ENCODE measurements at regions of chr9 and their contacts with region 1.

Region 1: DNA sequence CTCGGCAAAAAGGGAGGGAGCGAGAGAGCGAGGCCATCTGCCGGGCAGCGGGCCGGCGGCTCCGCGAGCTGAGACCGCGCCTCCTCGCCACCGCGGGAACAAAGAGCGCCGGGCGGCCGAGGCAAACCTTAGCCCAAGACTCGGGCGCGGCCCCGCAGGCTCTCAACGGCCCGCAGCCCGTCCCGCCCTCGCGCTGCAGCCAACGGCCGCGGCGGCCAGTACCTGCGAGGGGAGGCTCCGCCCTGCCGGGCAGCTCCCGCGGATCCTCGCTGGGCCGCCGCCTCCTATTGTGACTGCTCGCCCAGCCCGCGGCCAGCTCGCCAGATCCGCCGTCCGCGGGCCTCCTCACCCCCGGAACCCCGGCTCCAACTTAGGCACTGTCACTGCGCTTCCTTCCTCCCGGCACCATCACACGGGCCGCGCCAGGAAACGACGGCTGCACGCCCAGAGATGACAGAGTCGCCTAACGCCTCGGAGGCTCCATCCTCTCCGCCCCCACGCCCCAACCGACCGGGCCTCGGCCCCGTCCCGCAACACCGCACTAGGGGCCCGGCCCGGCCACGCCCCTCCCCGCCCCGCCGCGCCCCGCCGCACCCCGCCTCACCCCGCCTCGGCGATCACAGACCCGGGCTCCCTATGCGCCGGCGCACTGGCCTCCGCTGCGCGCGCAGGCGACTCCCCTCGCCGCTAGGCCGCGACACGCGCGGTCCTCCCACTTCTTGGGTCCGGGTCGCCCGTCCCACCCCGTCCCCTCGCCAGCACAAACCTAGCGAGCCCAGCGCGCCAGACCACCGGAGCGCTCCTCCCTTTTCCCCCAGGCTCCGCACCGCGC is 479 bp upstream of the RNF38 start:
- DNase-seq: peak; percentile 96
- ATAC-seq: peak; percentile 77
- H3K4me3 Mint-ChIP-seq: peak overlapping the region; percentile 93
- H3K27ac Mint-ChIP-seq: peak overlapping the region; percentile 98
- H3K4me1 Mint-ChIP-seq: peaks cover 39% of the 10 kb centered on the region
- H3K27me3 Mint-ChIP-seq: no peaks in the 10 kb centered on the region

Region 2: DNA sequence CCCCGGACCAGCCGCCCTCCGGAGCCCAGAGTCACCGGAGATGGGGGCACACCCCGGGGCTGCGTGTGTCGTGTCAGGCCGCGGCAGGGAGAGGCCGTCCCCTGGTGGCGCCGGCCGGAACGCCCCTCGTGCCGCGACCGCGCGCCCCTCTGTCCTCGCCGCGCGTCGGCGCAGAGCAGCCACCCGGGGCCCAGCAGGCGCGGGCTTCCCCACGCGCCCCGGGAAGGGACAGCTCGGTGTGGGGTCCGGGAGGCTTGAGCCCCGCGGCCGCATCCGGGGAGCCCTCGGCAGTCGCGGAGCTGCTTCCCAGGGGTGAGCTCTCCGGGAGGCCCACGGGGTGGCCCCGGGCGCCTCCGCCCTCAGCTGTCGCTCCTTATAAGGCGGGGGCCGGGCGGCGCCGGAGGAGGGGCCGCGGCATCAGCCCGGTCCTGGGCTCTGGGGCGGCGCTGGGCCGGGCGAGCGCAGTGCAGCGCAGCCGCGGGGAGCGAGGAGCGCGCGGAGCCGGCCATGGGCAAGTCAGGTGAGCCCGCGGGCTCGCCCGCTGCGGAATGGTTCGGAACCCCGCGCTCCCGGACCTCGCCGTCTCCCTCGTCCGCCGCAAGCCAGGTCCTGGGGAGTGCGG is 264.2 kb before region 1 on chr9 and contains the start of gene GLIPR2:
- CTCF ChIA-PET with region 1: no interaction called
- POLR2A ChIA-PET with region 1: no interaction called
- intact Hi-C with region 1: loop called in 1 of 2 experiments (anchors 5 kb)
- DNase-seq: peak; percentile 88
- ATAC-seq: peak; percentile 96
- H3K4me3 Mint-ChIP-seq: peak within 1 kb of the TSS; percentile 81
- H3K27ac Mint-ChIP-seq: peak within 1 kb of the TSS; percentile 48
- H3K4me1 Mint-ChIP-seq: peaks cover 45% of the 10 kb centered on the region
- H3K27me3 Mint-ChIP-seq: no peaks in the 10 kb centered on the region
- total RNA-seq, gene GLIPR2: 13.7 to 18.4 TPM

Region 3: GRCh38 chr9:36276781-36277181 is 123.8 kb before region 1 on chr9:
- CTCF ChIA-PET with region 1: no interaction called
- POLR2A ChIA-PET with region 1: no interaction called
- intact Hi-C with region 1: no loop called
- DNase-seq: no peak
- ATAC-seq: no peak
- H3K4me3 Mint-ChIP-seq: no peak overlapping the region
- H3K27ac Mint-ChIP-seq: no peak overlapping the region
- H3K4me1 Mint-ChIP-seq: peaks cover 3% of the 10 kb centered on the region
- H3K27me3 Mint-ChIP-seq: no peaks in the 10 kb centered on the region

Region 4: GRCh38 chr9:36337865-36338264 is 62.7 kb before region 1 on chr9:
- CTCF ChIA-PET with region 1: no interaction called
- POLR2A ChIA-PET with region 1: interaction called, 4 read pairs
- intact Hi-C with region 1: loop called in 1 of 2 experiments (anchors 5 kb)
- DNase-seq: no peak
- ATAC-seq: no peak
- H3K4me3 Mint-ChIP-seq: no peak overlapping the region
- H3K27ac Mint-ChIP-seq: peak overlapping the region; percentile 39
- H3K4me1 Mint-ChIP-seq: peaks cover 9% of the 10 kb centered on the region
- H3K27me3 Mint-ChIP-seq: no peaks in the 10 kb centered on the region

Region 5: GRCh38 chr9:36470643-36471290 is 70.2 kb after region 1 on chr9:
- CTCF ChIA-PET with region 1: interaction called, 5 read pairs
- POLR2A ChIA-PET with region 1: interaction called, 3 read pairs
- intact Hi-C with region 1: loop called in 1 of 2 experiments (anchors 1 kb)
- DNase-seq: peak; percentile 78
- ATAC-seq: peak; percentile 97
- H3K4me3 Mint-ChIP-seq: peak overlapping the region; percentile 72
- H3K27ac Mint-ChIP-seq: peak overlapping the region; percentile 97
- H3K4me1 Mint-ChIP-seq: peaks cover 31% of the 10 kb centered on the region
- H3K27me3 Mint-ChIP-seq: no peaks in the 10 kb centered on the region

Region 6: DNA sequence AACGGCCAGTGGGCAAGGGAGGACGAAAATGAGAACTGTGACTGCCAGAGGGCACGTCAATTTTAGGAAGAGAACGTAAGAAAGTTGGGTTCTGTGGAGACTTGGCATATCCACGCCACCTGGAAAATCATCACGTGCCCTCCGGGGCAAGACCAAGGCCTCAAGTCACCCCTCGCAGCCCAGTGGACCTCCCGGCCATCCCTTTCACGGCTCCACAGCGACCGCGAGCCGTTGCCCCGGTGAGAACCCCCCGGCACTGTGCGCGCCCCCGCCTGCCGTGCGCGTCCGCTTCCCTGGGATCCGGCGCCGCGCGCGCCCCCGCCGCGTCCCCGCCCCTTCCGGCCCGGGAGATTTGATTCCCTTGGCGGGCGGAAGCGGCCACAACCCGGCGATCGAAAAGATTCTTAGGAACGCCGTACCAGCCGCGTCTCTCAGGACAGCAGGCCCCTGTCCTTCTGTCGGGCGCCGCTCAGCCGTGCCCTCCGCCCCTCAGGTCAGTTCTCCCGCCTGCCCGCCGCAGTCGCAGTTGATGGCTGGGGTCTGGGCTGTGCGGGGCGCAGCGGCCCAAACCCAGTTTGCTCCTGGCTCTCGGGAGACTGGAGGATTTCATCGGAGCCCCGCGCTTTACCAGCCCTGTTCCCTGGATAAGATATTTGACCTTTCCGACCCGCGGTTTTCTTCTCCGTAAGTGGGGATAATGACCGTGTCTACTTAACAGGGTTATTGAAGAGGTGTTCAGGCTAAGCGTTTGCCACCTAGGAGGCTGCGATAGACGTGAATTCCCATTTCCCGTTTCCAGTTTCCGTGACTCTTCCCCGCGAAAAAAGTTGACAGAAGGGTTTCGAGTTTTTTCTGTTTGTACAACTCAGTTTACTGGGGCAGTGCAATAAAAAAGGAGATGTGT is 172.2 kb after region 1 on chr9 and contains the start of gene MELK:
- CTCF ChIA-PET with region 1: no interaction called
- POLR2A ChIA-PET with region 1: no interaction called
- intact Hi-C with region 1: loop called (anchors 1 to 5 kb)
- DNase-seq: peak; percentile 89
- ATAC-seq: peak; percentile 73
- H3K4me3 Mint-ChIP-seq: peak within 1 kb of the TSS; percentile 97
- H3K27ac Mint-ChIP-seq: peak within 1 kb of the TSS; percentile 85
- H3K4me1 Mint-ChIP-seq: peaks cover 27% of the 10 kb centered on the region
- H3K27me3 Mint-ChIP-seq: no peaks in the 10 kb centered on the region
- total RNA-seq, gene MELK: 63.9 to 66.1 TPM

Region 7: GRCh38 chr9:37465249-37466036 is 1064.9 kb after region 1 on chr9 and contains the start of gene ZBTB5:
- CTCF ChIA-PET with region 1: no interaction called
- POLR2A ChIA-PET with region 1: no interaction called
- intact Hi-C with region 1: loop called in 1 of 2 experiments (anchors 1 kb)
- DNase-seq: peak; percentile 99
- ATAC-seq: peak; percentile 85
- H3K4me3 Mint-ChIP-seq: peak within 1 kb of the TSS; percentile 97
- H3K27ac Mint-ChIP-seq: peak within 1 kb of the TSS; percentile 96
- H3K4me1 Mint-ChIP-seq: peaks cover 30% of the 10 kb centered on the region
- H3K27me3 Mint-ChIP-seq: no peaks in the 10 kb centered on the region
- total RNA-seq, gene ZBTB5: 8.0 to 9.1 TPM